Activated T-helper 1 cell treated with anti-CD3 and anti-CD28 coated beads, Interleukin-12 subunit alpha, Interleukin-12 subunit beta, Interleukin-2, Interleukin-4 antibody, amounts not matched to agents 30 ng/mL and 10 ng/mL and 1 ng/mL, durations not matched to agents 14 hours and 24 hours and 36 hours (primary cell): ENCODE measurements at regions of chr4 and their contacts with region 1.

Region 1: GRCh38 chr4:139950568-139950967 is 203.4 kb downstream of the MAML3 start:
- DNase-seq: peak; percentile 57
- H3K4me3 Mint-ChIP-seq: peak overlapping the region; percentile 48
- H3K27ac Mint-ChIP-seq: peak overlapping the region; percentile 85
- H3K4me1 Mint-ChIP-seq: peaks cover 49% of the 10 kb centered on the region
- H3K27me3 Mint-ChIP-seq: peaks cover 9% of the 10 kb centered on the region

Region 2: GRCh38 chr4:139734875-139735380 is 215.6 kb before region 1 on chr4:
- intact Hi-C with region 1: loop called (anchors 5 kb)
- DNase-seq: peak; percentile 42
- H3K4me3 Mint-ChIP-seq: peak overlapping the region; percentile 66
- H3K27ac Mint-ChIP-seq: no peak overlapping the region
- H3K4me1 Mint-ChIP-seq: peaks cover 6% of the 10 kb centered on the region
- H3K27me3 Mint-ChIP-seq: peaks cover 45% of the 10 kb centered on the region

Region 3: GRCh38 chr4:139898293-139898692 is 52.3 kb before region 1 on chr4:
- intact Hi-C with region 1: loop called (anchors 1 kb)
- DNase-seq: no peak
- H3K4me3 Mint-ChIP-seq: no peak overlapping the region
- H3K27ac Mint-ChIP-seq: peak overlapping the region; percentile 27
- H3K4me1 Mint-ChIP-seq: peaks cover 19% of the 10 kb centered on the region
- H3K27me3 Mint-ChIP-seq: peaks cover 6% of the 10 kb centered on the region

Region 4: DNA sequence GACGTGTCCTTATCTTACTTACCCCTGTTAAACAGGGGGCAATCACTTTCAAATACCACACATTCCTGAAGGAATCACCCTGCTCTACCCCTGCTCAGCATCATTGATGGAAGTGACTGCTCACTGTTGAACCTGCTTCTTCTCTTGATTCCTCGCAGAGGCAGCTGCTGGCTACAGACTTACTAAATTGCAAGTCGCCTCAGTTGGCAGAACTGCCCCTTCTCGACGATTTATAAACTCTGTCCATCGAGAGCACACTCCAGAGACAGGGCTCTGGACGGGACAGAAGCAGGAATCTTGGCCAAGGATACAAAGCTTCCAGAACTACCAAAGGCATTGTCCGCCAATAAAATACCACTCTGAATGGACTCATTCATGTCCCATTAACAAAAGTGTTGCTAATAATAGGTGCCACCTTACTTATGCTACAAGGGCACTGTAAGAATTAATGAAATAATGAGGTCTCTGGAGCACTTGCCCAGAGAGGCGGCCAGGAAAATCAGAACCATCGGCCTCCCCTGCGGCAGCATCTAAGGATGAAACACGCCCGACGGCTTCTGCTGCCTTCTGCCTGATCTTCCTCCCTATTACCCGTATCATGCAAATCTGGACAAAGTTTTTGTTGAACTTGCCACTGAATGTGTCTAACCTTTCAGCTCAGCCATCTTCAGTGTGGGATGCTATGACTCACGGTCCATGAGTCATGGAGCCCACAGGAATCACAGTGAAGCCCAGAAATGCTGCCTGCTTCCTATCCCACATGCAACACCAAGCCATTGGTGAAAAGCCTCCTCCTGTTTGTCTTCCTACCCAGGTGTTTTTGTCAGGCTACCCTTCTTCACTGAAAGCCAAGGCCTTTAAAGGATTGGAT is 38.5 kb after region 1 on chr4:
- intact Hi-C with region 1: loop called (anchors 1 kb)
- DNase-seq: no peak
- H3K4me3 Mint-ChIP-seq: no peak overlapping the region
- H3K27ac Mint-ChIP-seq: no peak overlapping the region
- H3K4me1 Mint-ChIP-seq: peaks cover 12% of the 10 kb centered on the region
- H3K27me3 Mint-ChIP-seq: peaks cover 12% of the 10 kb centered on the region

Region 5: GRCh38 chr4:140071806-140072205 is 121.2 kb after region 1 on chr4:
- intact Hi-C with region 1: loop called (anchors 1 kb)
- DNase-seq: peak; percentile 62
- H3K4me3 Mint-ChIP-seq: peak overlapping the region; percentile 71
- H3K27ac Mint-ChIP-seq: peak overlapping the region; percentile 70
- H3K4me1 Mint-ChIP-seq: peaks cover 59% of the 10 kb centered on the region
- H3K27me3 Mint-ChIP-seq: peaks cover 48% of the 10 kb centered on the region

Region 6: DNA sequence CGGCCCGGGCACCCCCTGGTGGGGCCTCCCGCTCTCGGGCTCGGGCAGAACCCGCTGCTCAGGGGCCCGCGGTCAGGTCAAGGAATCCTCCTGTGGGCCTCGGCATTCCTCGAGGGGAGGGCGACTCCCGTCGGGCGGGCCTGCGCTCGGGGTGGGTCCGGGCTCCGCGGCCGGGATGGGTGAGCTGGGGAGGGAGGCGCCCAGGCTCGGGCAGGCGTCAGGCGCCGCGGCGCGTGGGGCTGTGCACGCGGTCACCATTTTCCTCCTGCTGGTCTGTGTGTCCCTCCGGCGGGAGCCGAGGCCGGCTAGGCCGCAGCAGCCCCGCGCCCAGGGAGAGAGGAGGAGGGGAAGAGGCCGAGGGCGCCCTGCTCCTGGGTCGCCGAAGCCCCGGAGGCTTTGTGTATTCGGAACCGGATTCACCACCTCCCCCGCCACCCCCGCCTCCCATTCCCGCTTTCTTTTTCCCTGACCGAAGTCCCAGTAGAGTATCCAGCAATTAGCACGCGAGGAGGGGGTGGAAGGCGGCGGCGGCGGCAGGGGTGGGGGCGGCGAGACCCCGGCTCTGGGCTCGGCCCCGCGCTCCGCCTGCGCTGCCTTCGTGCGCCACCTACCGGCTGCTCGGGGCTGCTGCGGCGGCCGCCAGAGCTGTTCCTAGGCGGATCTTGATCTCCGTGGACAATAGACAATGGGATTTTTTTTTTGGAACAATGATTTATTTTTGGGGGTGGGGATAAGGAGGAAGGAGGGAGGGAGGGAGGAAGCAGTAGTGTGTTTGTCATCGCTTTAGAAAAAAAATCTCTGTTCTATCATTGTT is 302.4 kb after region 1 on chr4:
- intact Hi-C with region 1: loop called (anchors 5 kb)
- DNase-seq: peak; percentile 32
- H3K4me3 Mint-ChIP-seq: peak overlapping the region; percentile 76
- H3K27ac Mint-ChIP-seq: peak overlapping the region; percentile 59
- H3K4me1 Mint-ChIP-seq: peaks cover 28% of the 10 kb centered on the region
- H3K27me3 Mint-ChIP-seq: peaks cover 36% of the 10 kb centered on the region